Dendritic cell treated with granulocyte-macrophage colony-stimulating factor and Interleukin-4, amounts not matched to agents 40 ng/mL and 50 ng/mL, for 4 days (primary cell): ENCODE measurements at regions of chrX and their contacts with region 1.

Region 1: GRCh38 chrX:120560842-120561633 is at the start of gene CUL4B:
- H3K4me3 Mint-ChIP-seq: peak within 1 kb of the TSS; percentile 95
- H3K27ac Mint-ChIP-seq: peak within 1 kb of the TSS; percentile 93
- H3K4me1 Mint-ChIP-seq: peaks cover 7% of the 10 kb centered on the region
- H3K27me3 Mint-ChIP-seq: no peaks in the 10 kb centered on the region

Region 2: DNA sequence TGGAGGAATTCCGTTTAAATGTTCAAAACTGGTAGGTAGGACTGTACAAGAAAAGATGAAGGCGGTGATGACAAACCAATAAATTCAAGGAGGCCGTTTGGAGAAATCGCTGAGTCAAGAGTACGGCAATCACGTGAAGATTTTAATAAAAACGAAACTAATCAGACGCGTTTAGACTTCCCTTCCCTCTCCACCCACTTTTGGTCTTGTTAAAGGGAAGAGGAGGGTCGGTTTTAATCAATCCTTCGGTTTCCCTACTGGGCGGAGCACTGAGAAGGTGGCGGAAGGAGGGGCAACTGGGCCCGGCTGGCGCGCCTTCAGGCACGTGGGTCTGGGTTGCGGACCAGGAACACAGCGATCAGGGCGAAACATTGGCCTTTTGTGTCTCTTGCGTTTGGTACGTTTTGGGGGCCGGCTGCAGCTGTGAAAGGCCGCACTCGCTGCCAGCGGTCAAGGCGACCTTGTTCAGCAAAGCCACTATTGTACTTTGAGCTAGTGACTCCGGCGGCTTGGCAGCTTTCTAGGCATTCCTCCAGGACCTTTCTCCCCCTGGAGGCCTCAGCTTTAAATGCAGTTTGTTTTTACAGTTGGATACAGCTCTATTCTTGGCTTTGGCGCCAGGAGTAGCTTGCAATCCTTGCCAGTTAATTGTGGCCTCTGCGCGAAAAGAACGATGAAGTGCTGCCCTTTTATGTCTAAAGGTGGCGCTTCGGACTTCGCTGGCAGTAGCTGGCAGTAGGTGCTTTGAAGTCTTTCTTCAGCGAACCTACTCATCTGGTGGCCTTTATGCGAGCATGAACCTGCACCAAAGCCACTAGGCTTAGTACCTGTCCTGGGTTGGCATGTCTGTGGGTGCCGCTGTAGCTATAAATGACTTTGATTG is 75.2 kb before region 1 on chrX:
- intact Hi-C with region 1: loop called (anchors 2 kb)
- H3K4me3 Mint-ChIP-seq: peak overlapping the region; percentile 75
- H3K27ac Mint-ChIP-seq: peak overlapping the region; percentile 91
- H3K4me1 Mint-ChIP-seq: peaks cover 19% of the 10 kb centered on the region
- H3K27me3 Mint-ChIP-seq: no peaks in the 10 kb centered on the region

Region 3: GRCh38 chrX:120514236-120514635 is 46.8 kb before region 1 on chrX:
- intact Hi-C with region 1: no loop called
- H3K4me3 Mint-ChIP-seq: no peak overlapping the region
- H3K27ac Mint-ChIP-seq: no peak overlapping the region
- H3K4me1 Mint-ChIP-seq: no peaks in the 10 kb centered on the region
- H3K27me3 Mint-ChIP-seq: no peaks in the 10 kb centered on the region

Region 4: GRCh38 chrX:120603707-120604360 is 42.8 kb after region 1 on chrX and contains the start of gene MCTS1:
- intact Hi-C with region 1: loop called (anchors 1 kb)
- H3K4me3 Mint-ChIP-seq: peak within 1 kb of the TSS; percentile 90
- H3K27ac Mint-ChIP-seq: peak within 1 kb of the TSS; percentile 99
- H3K4me1 Mint-ChIP-seq: peaks cover 6% of the 10 kb centered on the region
- H3K27me3 Mint-ChIP-seq: no peaks in the 10 kb centered on the region

Region 5: GRCh38 chrX:120629667-120630537 is 68.9 kb after region 1 on chrX and contains the start of gene C1GALT1C1:
- intact Hi-C with region 1: loop called (anchors 2 kb)
- H3K4me3 Mint-ChIP-seq: peak within 1 kb of the TSS; percentile 94
- H3K27ac Mint-ChIP-seq: peak within 1 kb of the TSS; percentile 94
- H3K4me1 Mint-ChIP-seq: no peaks in the 10 kb centered on the region
- H3K27me3 Mint-ChIP-seq: no peaks in the 10 kb centered on the region

Region 6: DNA sequence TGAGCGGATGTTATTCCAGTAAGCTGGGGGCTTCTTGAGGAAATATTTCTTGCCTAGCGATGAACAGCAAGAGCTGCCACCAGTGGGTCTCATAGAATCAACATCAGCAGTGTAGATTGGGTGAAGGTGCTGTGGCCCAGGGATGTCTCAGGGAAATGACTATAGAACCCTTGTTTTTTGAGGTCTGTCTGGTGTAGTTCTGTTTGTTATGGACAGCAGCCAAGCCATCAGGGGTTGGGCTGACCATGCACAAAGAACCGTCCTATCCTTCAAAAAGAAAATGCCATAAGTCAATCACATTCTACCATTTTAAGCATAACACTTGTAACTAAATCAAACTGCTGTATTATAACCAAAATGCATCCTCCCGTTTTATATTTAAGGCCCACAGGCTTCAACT is 86.1 kb after region 1 on chrX:
- intact Hi-C with region 1: no loop called
- H3K4me3 Mint-ChIP-seq: no peak overlapping the region
- H3K27ac Mint-ChIP-seq: no peak overlapping the region
- H3K4me1 Mint-ChIP-seq: no peaks in the 10 kb centered on the region
- H3K27me3 Mint-ChIP-seq: no peaks in the 10 kb centered on the region

Region 7: DNA sequence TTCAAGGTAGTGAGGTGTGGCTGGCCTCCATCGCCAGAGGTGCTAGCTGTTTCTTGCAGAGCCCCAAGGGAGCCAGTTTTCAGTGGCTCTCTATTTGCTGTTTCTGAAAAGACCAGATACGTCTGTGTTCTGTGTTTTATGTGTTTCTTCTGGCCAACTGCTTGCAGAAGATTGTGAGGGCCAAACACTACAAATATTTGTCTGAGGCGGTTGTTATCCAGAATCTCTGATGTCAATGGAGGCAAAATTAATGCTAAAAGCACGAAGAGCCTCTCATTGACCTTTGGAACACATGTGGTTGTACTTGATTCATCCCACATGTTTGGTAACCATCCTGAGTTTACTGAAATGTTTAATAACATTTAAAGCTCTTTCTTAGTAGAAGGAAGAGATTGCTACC is 200.8 kb after region 1 on chrX:
- intact Hi-C with region 1: no loop called
- H3K4me3 Mint-ChIP-seq: no peak overlapping the region
- H3K27ac Mint-ChIP-seq: no peak overlapping the region
- H3K4me1 Mint-ChIP-seq: no peaks in the 10 kb centered on the region
- H3K27me3 Mint-ChIP-seq: no peaks in the 10 kb centered on the region